Heart left ventricle (tissue), 16 donors: ENCODE measurements at regions of chr1 and their contacts with region 1.

Region 1: GRCh38 chr1:25442178-25442577 is 11.5 kb downstream of the MACO1 start:
- DNase-seq: no peak
- ATAC-seq: peak in 1 of 4 donors; percentile 47
- H3K4me3 ChIP-seq: no peak overlapping the region
- H3K27ac ChIP-seq: no peak overlapping the region
- H3K4me1 ChIP-seq: peaks cover 0 to 19% (median 11%) of the 10 kb centered on the region in 12 donors
- H3K27me3 ChIP-seq: no peaks in the 10 kb centered on the region
- CTCF ChIP-seq: no peak
- POLR2A ChIP-seq: no peak

Region 2: GRCh38 chr1:25223471-25223870 is 218.7 kb before region 1 on chr1:
- intact Hi-C with region 1: no loop called
- DNase-seq: no peak
- ATAC-seq: no peak
- H3K4me3 ChIP-seq: no peak overlapping the region
- H3K27ac ChIP-seq: no peak overlapping the region
- H3K4me1 ChIP-seq: no peaks in the 10 kb centered on the region
- H3K27me3 ChIP-seq: no peaks in the 10 kb centered on the region
- CTCF ChIP-seq: no peak
- POLR2A ChIP-seq: no peak

Region 3: GRCh38 chr1:25476186-25477097 is 34.3 kb after region 1 on chr1:
- intact Hi-C with region 1: loop called in 1 of 10 experiments (anchors 5 kb)
- DNase-seq: no peak
- ATAC-seq: no peak
- H3K4me3 ChIP-seq: no peak overlapping the region
- H3K27ac ChIP-seq: no peak overlapping the region
- H3K4me1 ChIP-seq: peaks cover 0 to 46% (median 21%) of the 10 kb centered on the region in 12 donors
- H3K27me3 ChIP-seq: no peaks in the 10 kb centered on the region
- CTCF ChIP-seq: no peak
- POLR2A ChIP-seq: no peak